ENCODE measurements at regions of chr11 and their contacts with region 1.

Region 1: GRCh38 chr11:128905345-128906184 is 14.4 kb downstream of the KCNJ5 start:
- DNase-seq: peak; percentile 71
- ATAC-seq: peak; percentile 80
- H3K4me3 Mint-ChIP-seq: peak overlapping the region; percentile 61
- H3K27ac Mint-ChIP-seq: no peak overlapping the region
- H3K4me1 Mint-ChIP-seq: peaks cover 6% of the 10 kb centered on the region
- H3K27me3 Mint-ChIP-seq: peaks cover 44% of the 10 kb centered on the region

Region 2: DNA sequence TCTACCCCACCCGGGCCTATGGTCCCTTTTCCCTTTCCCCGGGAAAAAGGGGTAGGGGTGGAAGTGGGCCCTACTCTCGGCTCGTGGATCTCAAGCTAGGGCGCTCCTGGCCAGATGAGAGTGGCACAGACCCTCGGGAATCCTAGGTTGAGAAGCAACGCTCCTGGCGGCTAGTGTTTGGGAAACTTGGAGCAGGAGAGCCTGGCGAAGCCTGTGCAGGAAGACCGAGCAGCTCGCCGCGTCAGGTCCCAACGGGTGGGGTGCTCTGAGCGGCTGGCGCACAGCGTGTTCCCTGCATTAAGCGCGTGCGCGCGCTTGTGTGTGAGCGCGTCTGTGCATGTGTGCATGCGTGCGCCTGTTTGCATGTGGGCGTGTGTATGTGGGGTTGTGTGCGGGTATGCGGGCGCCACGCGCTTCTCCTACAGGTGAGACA is 218.8 kb before region 1 on chr11:
- CTCF ChIA-PET with region 1: no interaction called
- POLR2A ChIA-PET with region 1: no interaction called
- intact Hi-C with region 1: no loop called
- DNase-seq: peak; percentile 80
- ATAC-seq: peak; percentile 80
- H3K4me3 Mint-ChIP-seq: peak overlapping the region; percentile 70
- H3K27ac Mint-ChIP-seq: peak overlapping the region; percentile 56
- H3K4me1 Mint-ChIP-seq: peaks cover 32% of the 10 kb centered on the region
- H3K27me3 Mint-ChIP-seq: peaks cover 33% of the 10 kb centered on the region

Region 3: DNA sequence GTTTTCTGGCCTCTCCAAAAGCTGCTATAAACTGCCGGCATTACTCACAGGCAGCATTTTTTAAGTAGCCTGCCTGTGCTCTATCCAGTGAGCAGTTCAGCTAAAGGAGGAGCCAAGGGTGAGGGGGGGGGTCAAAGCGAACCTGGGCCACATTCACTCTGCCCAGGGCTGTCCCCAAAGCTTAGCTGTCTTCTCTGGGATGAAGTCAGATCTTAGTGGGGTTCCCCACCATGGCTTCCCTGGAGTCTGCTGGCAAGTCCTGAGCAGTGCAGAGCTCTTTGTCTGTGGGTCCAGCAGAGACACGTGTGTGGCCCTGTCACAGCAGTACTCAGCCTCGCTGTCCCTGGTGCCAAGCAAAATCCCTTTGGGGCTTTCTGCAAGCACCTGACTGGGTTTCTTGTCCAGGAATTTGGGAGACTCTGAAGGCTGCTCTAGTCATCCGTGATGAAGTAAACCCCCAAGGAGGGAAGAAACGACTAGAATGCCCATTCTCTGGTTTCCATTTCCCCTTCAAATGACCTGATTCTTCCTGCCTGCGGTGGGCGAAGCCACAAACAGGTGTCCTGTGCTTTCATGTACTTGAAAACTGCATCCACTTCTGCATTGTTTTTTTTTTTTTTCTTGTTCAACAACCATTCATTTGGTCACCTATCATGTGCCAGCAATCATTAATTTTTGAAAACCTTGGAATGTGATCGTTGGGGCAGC is 11.8 kb before region 1 on chr11:
- CTCF ChIA-PET with region 1: interaction called, 28 read pairs
- POLR2A ChIA-PET with region 1: no interaction called
- intact Hi-C with region 1: no loop called
- DNase-seq: no peak
- ATAC-seq: no peak
- H3K4me3 Mint-ChIP-seq: no peak overlapping the region
- H3K27ac Mint-ChIP-seq: no peak overlapping the region
- H3K4me1 Mint-ChIP-seq: peaks cover 2% of the 10 kb centered on the region
- H3K27me3 Mint-ChIP-seq: peaks cover 26% of the 10 kb centered on the region

Region 4: DNA sequence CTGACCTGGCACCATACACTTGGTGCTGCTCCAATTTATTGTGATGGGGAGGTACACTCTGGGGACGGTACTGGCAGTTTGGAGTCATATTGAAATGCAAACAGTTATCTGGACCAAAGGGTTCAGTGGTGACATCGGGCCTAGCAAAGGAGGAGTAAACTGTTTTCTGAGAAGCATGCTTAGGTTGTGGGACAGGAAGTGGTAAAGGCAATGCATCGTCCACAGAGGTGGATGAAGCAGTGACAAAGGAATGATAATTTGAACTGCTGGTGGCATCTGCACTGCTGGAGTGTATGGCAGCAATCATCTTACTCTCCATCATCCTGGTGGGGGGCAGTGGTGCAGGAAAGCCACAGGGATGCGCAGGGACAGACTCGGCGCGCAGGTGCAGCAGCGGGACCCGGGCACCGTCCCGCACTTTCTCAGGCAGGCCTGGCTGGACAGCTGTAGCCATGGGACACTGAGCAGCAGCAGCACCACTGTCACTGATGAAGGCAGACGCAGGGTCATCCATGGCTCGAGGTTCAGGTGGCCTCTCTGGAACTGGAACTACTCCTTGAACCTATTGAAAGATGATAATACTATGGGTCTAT is 65.1 kb after region 1 on chr11:
- CTCF ChIA-PET with region 1: no interaction called
- POLR2A ChIA-PET with region 1: no interaction called
- intact Hi-C with region 1: no loop called
- DNase-seq: no peak
- ATAC-seq: no peak
- H3K4me3 Mint-ChIP-seq: no peak overlapping the region
- H3K27ac Mint-ChIP-seq: no peak overlapping the region
- H3K4me1 Mint-ChIP-seq: peaks cover 1% of the 10 kb centered on the region
- H3K27me3 Mint-ChIP-seq: no peaks in the 10 kb centered on the region

Measured in activated CD4-positive, alpha-beta T cell treated with anti-CD3 and anti-CD28 coated beads for 36 hours (primary cell).